SK-N-SH (cell line): ENCODE measurements at regions of chr3 and their contacts with region 1.

Region 1: DNA sequence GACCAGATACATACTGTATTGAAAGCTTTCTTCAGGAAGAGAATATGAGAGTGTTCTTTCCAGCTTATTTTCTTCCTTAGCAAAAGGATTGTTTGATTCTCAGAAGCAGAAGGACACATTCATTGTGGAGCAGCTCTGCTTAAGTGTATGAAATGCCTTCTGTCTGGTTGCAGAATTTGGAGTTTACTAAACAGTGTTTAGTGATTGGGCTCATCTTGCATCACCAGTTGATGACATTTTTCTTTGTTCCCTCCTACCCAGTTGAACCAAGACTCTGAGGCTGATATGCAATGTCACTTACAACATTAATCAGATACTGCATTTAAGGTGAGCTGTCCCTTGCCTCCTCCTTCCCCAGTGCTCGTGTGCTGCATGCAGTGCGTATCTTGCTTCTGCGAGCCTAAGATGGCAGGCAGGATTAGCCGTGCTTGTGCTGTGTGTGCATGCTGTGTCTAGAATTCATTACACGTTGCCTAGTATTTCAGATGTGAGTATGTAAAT is 18.4 kb downstream of the ZBTB38 start:
- DNase-seq: no peak
- H3K4me3 ChIP-seq: peak overlapping the region; percentile 19 to 45; a peak in 3 of 4 replicates
- H3K27ac ChIP-seq: peak overlapping the region; percentile 11 to 94; a peak in 3 of 4 replicates
- H3K4me1 ChIP-seq: peaks cover 7 to 19% of the 10 kb centered on the region in 2 experiments; a peak in 3 of 4 replicates
- H3K27me3 ChIP-seq: no peaks in the 10 kb centered on the region
- CTCF ChIP-seq: no peak
- EP300 ChIP-seq: no peak
- RAD21 ChIP-seq: 0 out of 2 replicates have a peak, but pooled peaks have one; percentile 9

Region 2: DNA sequence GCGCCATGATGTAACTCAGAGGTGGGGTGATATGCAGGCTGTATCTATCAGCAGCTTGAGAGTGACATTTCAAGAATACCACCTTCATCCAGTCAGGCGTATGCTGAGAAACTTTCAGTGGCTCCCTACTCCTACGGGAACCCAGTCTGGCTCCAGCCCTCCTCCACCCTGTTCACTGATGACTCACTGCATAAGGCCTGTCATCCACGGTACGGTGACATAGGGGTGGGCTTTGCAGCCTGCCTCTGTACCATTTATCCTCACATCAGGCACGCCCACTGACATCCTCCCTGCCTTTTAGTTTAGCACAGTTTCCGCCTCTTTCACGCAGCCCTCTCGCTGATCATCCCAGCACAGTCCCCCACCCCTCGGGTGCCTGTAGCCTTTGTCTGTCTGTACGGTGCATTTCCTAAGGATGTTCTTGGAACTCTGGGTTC is 143.4 kb before region 1 on chr3:
- CTCF ChIA-PET with region 1: no interaction called
- POLR2A ChIA-PET with region 1: no interaction called
- DNase-seq: no peak
- H3K4me3 ChIP-seq: no peak overlapping the region
- H3K27ac ChIP-seq: no peak overlapping the region
- H3K4me1 ChIP-seq: peaks cover 19 to 21% of the 10 kb centered on the region in 2 experiments; a peak in 3 of 4 replicates
- H3K27me3 ChIP-seq: no peaks in the 10 kb centered on the region
- CTCF ChIP-seq: no peak
- EP300 ChIP-seq: no peak
- RAD21 ChIP-seq: no peak

Region 3: DNA sequence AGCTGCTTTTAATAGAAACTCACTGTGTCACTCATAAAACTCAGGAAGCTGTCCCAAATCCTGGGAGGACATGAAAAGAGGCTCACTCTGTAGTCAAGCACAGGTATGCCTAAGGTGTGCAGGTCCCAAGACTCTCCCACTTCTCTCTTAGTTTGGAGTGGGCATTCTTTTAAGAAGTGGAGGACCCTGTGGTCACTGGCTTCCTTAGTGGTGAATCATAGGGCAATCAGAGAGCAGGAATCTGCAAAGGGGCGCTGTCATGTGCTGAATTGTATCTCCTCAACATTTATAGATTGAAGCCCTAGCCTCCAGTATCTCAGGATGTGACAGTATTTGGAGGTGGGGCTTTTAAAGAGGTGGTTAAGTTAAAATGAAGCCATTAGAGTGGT is 65.6 kb before region 1 on chr3:
- CTCF ChIA-PET with region 1: no interaction called
- POLR2A ChIA-PET with region 1: no interaction called
- DNase-seq: no peak
- H3K4me3 ChIP-seq: no peak overlapping the region
- H3K27ac ChIP-seq: no peak overlapping the region
- H3K4me1 ChIP-seq: no peaks in the 10 kb centered on the region
- H3K27me3 ChIP-seq: no peaks in the 10 kb centered on the region
- CTCF ChIP-seq: no peak
- EP300 ChIP-seq: no peak
- RAD21 ChIP-seq: no peak

Region 4: DNA sequence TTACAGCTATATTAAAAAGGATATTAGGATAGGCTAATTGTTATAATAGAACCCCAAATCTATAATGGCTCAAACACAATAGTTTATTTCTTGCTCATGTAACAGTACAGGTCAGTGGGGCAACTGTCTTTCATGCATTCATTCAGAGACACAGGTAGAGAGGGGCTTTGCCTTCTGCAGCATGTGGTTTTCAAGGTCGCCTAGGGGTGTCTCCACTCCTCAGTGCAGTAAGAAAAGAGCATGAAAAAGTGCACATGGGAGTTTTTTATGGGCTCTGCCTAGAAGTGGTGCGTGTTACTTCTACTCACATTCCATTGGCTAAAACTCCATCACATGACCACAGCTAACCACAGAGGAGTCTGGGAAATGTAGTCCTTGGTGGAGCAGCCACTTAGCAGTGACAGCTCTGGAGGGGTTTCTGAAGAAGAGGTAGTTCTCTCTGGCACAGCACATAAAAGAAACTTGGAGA is 16.6 kb before region 1 on chr3:
- CTCF ChIA-PET with region 1: interaction called, 15 read pairs
- POLR2A ChIA-PET with region 1: no interaction called
- DNase-seq: peak; percentile 80
- H3K4me3 ChIP-seq: peak overlapping the region in 1 of 2 experiments; percentile 3; a peak in 1 of 4 replicates
- H3K27ac ChIP-seq: peak overlapping the region; percentile 40 to 99; a peak in 3 of 4 replicates
- H3K4me1 ChIP-seq: peaks cover 9 to 33% of the 10 kb centered on the region in 2 experiments
- H3K27me3 ChIP-seq: no peaks in the 10 kb centered on the region
- CTCF ChIP-seq: peak; percentile 52
- EP300 ChIP-seq: no peak
- RAD21 ChIP-seq: peak; percentile 66